ENCODE measurements at regions of chr6 and their contacts with region 1.

Region 1: DNA sequence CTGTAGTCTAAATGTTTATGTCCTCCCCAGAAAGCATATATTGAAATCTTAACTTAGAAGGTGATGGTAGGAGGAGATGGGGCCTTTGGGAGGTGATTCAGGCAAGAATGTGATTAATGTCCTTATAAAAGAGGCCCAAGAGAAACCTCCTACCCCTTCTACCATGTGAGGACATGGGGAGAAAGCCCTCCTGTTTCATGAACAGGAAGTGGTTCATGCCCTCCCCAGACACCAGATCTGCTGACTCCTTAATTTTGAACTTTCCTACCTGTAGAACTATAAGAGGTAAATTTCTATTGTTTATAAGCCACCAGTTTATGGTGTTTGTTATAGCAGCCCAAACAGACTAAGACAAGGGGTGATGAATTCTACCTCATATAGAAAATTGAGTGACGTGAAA is 8.7 kb upstream of the ECT2L start:
- DNase-seq: no peak
- ATAC-seq: no peak
- H3K4me3 ChIP-seq: no peak overlapping the region
- H3K27ac ChIP-seq: no peak overlapping the region
- H3K4me1 ChIP-seq: no peaks in the 10 kb centered on the region
- H3K27me3 ChIP-seq: no peaks in the 10 kb centered on the region
- CTCF ChIP-seq: no peak
- EP300 ChIP-seq: no peak
- POLR2A ChIP-seq: no peak
- RAD21 ChIP-seq: no peak

Region 2: DNA sequence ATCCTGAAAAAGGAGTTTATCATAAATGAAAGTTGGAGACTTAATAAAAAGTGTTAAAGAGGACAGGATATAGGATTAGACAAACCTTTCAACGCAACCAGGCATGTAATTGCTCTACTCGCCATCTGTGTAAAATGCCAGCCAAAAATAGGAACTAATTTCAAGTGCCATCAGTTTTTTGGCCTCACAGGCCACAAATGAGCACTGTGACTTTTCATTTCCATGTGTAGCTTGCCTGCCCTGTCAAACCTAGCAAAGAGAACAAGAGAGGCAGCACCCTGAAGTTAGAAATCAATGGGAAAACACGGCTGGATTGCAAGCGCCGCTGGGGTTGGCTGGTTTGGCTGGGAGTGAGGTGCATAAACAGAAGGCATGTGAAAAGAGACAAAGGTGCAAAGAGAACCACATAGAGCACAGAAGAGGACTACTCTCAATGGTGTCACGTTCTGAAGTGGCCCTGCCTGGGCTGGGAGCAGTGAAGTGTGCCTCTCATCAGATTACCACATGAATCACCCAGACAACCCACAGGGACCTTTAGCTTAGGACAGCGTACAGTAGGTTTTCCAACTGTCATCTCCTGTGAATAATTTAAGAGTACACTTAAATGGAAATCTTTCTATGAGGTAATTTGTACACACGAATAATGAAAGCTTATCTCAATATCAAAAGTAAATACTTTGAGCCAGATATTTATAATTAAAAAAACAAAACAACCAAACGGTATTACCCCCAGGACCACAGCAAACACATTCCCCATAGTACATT is 209.8 kb before region 1 on chr6:
- CTCF ChIA-PET with region 1: no interaction called
- POLR2A ChIA-PET with region 1: no interaction called
- in situ Hi-C with region 1: no loop called
- intact Hi-C with region 1: no loop called
- DNase-seq: no peak
- ATAC-seq: no peak
- H3K4me3 ChIP-seq: no peak overlapping the region
- H3K27ac ChIP-seq: no peak overlapping the region
- H3K4me1 ChIP-seq: peaks cover 23% of the 10 kb centered on the region
- H3K27me3 ChIP-seq: no peaks in the 10 kb centered on the region
- CTCF ChIP-seq: no peak
- EP300 ChIP-seq: no peak
- POLR2A ChIP-seq: no peak
- RAD21 ChIP-seq: no peak

Region 3: DNA sequence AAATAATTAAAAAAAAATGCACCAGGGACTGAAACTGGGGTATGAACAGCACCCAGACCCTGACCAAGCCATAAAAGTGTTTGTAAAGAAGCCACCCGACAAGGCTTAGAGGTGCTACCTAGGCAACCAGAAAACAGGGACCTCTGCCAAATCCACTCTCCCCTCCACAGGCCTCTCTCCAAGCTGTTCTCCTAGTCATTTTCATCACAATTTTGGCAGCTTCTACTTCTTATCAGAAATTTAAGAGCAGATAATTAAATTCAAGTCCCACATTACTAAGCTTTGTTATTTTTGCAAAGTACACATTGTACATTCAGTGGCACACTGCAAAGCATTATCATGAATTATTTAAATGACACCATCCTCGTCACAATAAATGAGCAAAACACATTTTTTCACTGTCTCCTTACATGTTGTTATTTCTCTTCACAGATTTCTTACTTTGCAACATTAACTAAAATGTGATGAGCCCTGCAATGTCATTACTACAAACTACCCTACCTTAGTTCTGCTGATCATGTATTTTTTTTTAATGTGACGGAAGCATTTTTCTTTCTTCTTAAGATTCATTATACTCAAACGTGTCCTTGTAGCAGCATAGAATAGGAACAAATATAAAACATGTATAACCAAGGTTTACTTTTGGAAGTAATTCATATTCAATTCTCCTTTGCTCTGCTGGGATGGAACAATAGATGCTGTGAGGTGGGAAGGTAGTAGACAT is 46.8 kb after region 1 on chr6:
- CTCF ChIA-PET with region 1: no interaction called
- POLR2A ChIA-PET with region 1: no interaction called
- in situ Hi-C with region 1: no loop called
- intact Hi-C with region 1: loop called (anchors 1 kb)
- DNase-seq: no peak
- ATAC-seq: no peak
- H3K4me3 ChIP-seq: no peak overlapping the region
- H3K27ac ChIP-seq: no peak overlapping the region
- H3K4me1 ChIP-seq: no peaks in the 10 kb centered on the region
- H3K27me3 ChIP-seq: peaks cover 0 to 7% of the 10 kb centered on the region in 2 experiments; a peak in 3 of 5 replicates
- CTCF ChIP-seq: no peak
- EP300 ChIP-seq: no peak
- POLR2A ChIP-seq: no peak
- RAD21 ChIP-seq: no peak

Measured in HepG2 (cell line).